ENCODE measurements at regions of chr9 and their contacts with region 1.

Region 1: DNA sequence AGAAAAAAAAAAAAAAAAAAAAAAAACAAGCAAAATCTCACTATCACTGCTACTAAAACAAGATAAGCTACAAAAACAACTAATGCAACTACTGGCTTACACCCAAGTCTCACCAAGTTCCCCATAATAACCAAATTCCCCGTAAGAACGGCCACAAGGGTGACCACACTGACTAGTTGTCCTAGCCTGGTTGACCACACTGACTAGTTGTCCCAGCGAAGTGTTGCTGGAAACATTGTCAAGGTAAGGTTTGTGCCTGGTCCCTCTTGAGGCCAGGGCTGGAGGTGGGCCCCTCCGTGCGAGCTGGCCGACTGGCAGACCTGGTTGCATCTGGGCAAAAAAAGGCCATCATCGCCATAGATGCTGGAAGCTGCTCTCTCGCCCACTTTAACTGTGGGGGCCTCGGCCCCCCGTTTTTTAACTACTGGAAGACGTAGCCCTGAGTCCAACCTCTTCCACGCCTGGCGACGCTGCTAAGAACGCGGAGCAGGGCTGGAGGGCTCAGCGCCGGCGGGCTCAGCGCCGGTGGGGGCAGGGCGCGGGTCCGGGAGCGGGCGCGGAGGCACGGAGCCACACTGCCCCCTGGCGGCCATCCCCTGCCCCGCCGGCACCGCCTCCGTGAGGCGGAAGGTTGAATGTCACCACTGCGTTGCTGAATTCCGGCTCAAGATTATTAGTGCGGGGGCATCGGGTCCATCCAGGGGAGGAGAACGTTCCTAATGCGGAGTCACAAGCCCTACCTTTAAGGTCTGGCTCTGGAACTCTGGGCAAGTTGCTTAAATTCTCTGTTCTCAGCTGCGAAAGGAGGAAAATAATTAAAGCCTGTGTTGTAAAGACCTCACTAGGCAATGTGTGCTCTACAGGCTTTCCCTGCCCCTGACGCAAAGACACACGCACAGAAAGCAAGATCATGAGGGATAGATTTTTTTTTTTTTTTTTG is 84.0 kb downstream of the HSD17B3 start:
- DNase-seq: peak; percentile 40 to 86 (median 73)
- ATAC-seq: peak; percentile 93
- H3K4me3 ChIP-seq: peak overlapping the region; percentile 17
- H3K4me3 Mint-ChIP-seq: peak overlapping the region; percentile 65 to 89 (median 77)
- H3K27ac ChIP-seq: no peak overlapping the region
- H3K27ac Mint-ChIP-seq: peak overlapping the region in 6 of 9 donors; percentile 6 to 78 (median 56)
- H3K4me1 ChIP-seq: peaks cover 0 to 11% of the 10 kb centered on the region in 2 donors
- H3K4me1 Mint-ChIP-seq: peaks cover 0 to 22% (median 11%) of the 10 kb centered on the region in 7 donors
- H3K27me3 ChIP-seq: peaks cover 0 to 3% of the 10 kb centered on the region in 2 donors
- H3K27me3 Mint-ChIP-seq: peaks cover 17 to 56% (median 47%) of the 10 kb centered on the region in 5 donors

Region 2: GRCh38 chr9:94672811-94673487 is 1545.1 kb before region 1 on chr9:
- CTCF ChIA-PET with region 1: no interaction called
- POLR2A ChIA-PET with region 1: no interaction called
- intact Hi-C with region 1: loop called in 1 of 2 experiments (anchors 2 kb)
- DNase-seq: no peak
- ATAC-seq: no peak
- H3K4me3 ChIP-seq: no peak overlapping the region
- H3K4me3 Mint-ChIP-seq: no peak overlapping the region
- H3K27ac ChIP-seq: no peak overlapping the region
- H3K27ac Mint-ChIP-seq: no peak overlapping the region
- H3K4me1 ChIP-seq: no peaks in the 10 kb centered on the region
- H3K4me1 Mint-ChIP-seq: peaks cover 0 to 14% (median 3%) of the 10 kb centered on the region in 7 donors
- H3K27me3 ChIP-seq: no peaks in the 10 kb centered on the region
- H3K27me3 Mint-ChIP-seq: peaks cover 0 to 26% (median 4%) of the 10 kb centered on the region in 5 donors

Region 3: GRCh38 chr9:94783102-94783664 is 1434.8 kb before region 1 on chr9:
- CTCF ChIA-PET with region 1: no interaction called
- POLR2A ChIA-PET with region 1: no interaction called
- intact Hi-C with region 1: loop called in 1 of 2 experiments (anchors 10 kb)
- DNase-seq: peak in 6 of 9 donors; percentile 10 to 31 (median 20)
- ATAC-seq: peak; percentile 61
- H3K4me3 ChIP-seq: no peak overlapping the region
- H3K4me3 Mint-ChIP-seq: no peak overlapping the region
- H3K27ac ChIP-seq: no peak overlapping the region
- H3K27ac Mint-ChIP-seq: no peak overlapping the region
- H3K4me1 ChIP-seq: no peaks in the 10 kb centered on the region
- H3K4me1 Mint-ChIP-seq: peaks cover 0 to 14% (median 6%) of the 10 kb centered on the region in 7 donors
- H3K27me3 ChIP-seq: no peaks in the 10 kb centered on the region
- H3K27me3 Mint-ChIP-seq: no peaks in the 10 kb centered on the region

Region 4: GRCh38 chr9:95268681-95269080 is 949.3 kb before region 1 on chr9:
- CTCF ChIA-PET with region 1: interaction called, 4 read pairs
- POLR2A ChIA-PET with region 1: no interaction called
- intact Hi-C with region 1: loop called (anchors 1 to 10 kb)
- DNase-seq: no peak
- ATAC-seq: no peak
- H3K4me3 ChIP-seq: no peak overlapping the region
- H3K4me3 Mint-ChIP-seq: no peak overlapping the region
- H3K27ac ChIP-seq: no peak overlapping the region
- H3K27ac Mint-ChIP-seq: peak overlapping the region in 2 of 9 donors; percentile 12 to 32
- H3K4me1 ChIP-seq: peaks cover 0 to 4% of the 10 kb centered on the region in 2 donors
- H3K4me1 Mint-ChIP-seq: peaks cover 9 to 49% (median 27%) of the 10 kb centered on the region in 7 donors
- H3K27me3 ChIP-seq: no peaks in the 10 kb centered on the region
- H3K27me3 Mint-ChIP-seq: no peaks in the 10 kb centered on the region

Region 5: GRCh38 chr9:95434116-95435073 is 783.6 kb before region 1 on chr9:
- CTCF ChIA-PET with region 1: no interaction called
- POLR2A ChIA-PET with region 1: no interaction called
- intact Hi-C with region 1: loop called in 1 of 2 experiments (anchors 1 kb)
- DNase-seq: no peak
- ATAC-seq: no peak
- H3K4me3 ChIP-seq: no peak overlapping the region
- H3K4me3 Mint-ChIP-seq: no peak overlapping the region
- H3K27ac ChIP-seq: no peak overlapping the region
- H3K27ac Mint-ChIP-seq: peak overlapping the region in 1 of 9 donors; percentile 47
- H3K4me1 ChIP-seq: no peaks in the 10 kb centered on the region
- H3K4me1 Mint-ChIP-seq: peaks cover 3 to 13% (median 11%) of the 10 kb centered on the region in 7 donors
- H3K27me3 ChIP-seq: no peaks in the 10 kb centered on the region
- H3K27me3 Mint-ChIP-seq: peaks cover 0 to 11% (median 0%) of the 10 kb centered on the region in 5 donors

Region 6: GRCh38 chr9:95810135-95810534 is 407.9 kb before region 1 on chr9:
- CTCF ChIA-PET with region 1: no interaction called
- POLR2A ChIA-PET with region 1: no interaction called
- intact Hi-C with region 1: loop called in 1 of 2 experiments (anchors 1 kb)
- DNase-seq: no peak
- ATAC-seq: no peak
- H3K4me3 ChIP-seq: no peak overlapping the region
- H3K4me3 Mint-ChIP-seq: no peak overlapping the region
- H3K27ac ChIP-seq: no peak overlapping the region
- H3K27ac Mint-ChIP-seq: no peak overlapping the region
- H3K4me1 ChIP-seq: no peaks in the 10 kb centered on the region
- H3K4me1 Mint-ChIP-seq: peaks cover 2 to 16% (median 12%) of the 10 kb centered on the region in 7 donors
- H3K27me3 ChIP-seq: no peaks in the 10 kb centered on the region
- H3K27me3 Mint-ChIP-seq: peaks cover 0 to 15% (median 0%) of the 10 kb centered on the region in 5 donors

Region 7: GRCh38 chr9:96126321-96126881 is 91.6 kb before region 1 on chr9:
- CTCF ChIA-PET with region 1: no interaction called
- POLR2A ChIA-PET with region 1: no interaction called
- intact Hi-C with region 1: no loop called
- DNase-seq: no peak
- ATAC-seq: no peak
- H3K4me3 ChIP-seq: no peak overlapping the region
- H3K4me3 Mint-ChIP-seq: no peak overlapping the region
- H3K27ac ChIP-seq: no peak overlapping the region
- H3K27ac Mint-ChIP-seq: no peak overlapping the region
- H3K4me1 ChIP-seq: no peaks in the 10 kb centered on the region
- H3K4me1 Mint-ChIP-seq: peaks cover 0 to 5% (median 0%) of the 10 kb centered on the region in 7 donors
- H3K27me3 ChIP-seq: no peaks in the 10 kb centered on the region
- H3K27me3 Mint-ChIP-seq: peaks cover 0 to 12% (median 4%) of the 10 kb centered on the region in 5 donors